ENCODE measurements at regions of chr1 and their contacts with region 1.

Region 1: DNA sequence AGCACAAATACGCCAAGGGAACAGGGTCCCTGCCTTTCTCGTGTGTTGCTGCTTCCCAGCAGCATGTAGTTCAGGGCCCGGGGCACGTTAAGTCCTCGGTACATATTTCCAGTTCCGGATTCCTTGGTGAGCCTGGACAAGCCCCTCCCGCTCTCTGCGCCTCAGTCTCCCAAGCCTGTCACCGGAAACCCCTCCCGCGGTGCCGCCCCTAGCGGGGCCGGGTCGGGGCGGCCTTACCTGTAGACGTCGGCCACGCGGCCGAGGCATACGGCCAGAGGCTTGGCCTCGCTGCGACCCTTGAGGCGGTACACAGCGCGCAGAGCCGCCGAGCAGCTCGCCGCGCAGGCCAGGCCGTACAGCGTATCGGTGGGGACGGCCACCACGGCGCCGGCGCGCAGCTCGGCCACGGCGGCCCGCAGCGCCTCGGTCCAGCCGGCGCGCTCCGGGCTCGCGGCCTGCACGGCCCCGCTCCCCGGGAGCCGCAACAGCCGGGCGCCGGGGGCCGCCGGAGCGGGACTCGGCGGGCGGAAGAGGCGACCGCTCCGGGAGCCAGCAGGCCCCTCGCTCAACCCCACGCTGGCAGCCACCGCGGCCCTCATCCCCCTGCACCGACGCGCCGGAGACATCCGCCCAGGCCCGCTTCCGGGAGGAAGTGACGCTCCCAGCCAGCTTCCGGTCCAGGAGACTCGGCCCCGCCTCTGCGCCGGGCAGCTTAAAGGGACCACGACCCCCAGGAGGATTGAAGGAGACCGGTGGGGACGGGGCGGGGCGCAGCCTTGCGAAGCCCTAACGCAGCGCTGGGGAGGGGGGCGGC is at the starts of genes C1orf122 and YRDC:
- DNase-seq: peak; percentile 92
- ATAC-seq: peak; percentile 84
- H3K4me3 ChIP-seq: peak within 1 kb of the TSS; percentile 90
- H3K27ac ChIP-seq: peak within 1 kb of the TSS; percentile 88
- H3K4me1 ChIP-seq: peaks cover 6% of the 10 kb centered on the region; the same call in 1 of the 2 replicates
- H3K27me3 ChIP-seq: no peaks in the 10 kb centered on the region
- CTCF ChIP-seq: no peak
- POLR2A ChIP-seq: peak; percentile 92
- RAD21 ChIP-seq: no peak
- total RNA-seq, gene C1orf122: 2.0 and 2.2 TPM in 2 replicates
- total RNA-seq, gene YRDC: 19.2 and 21.7 TPM in 2 replicates

Region 2: GRCh38 chr1:37574834-37575480 is 232.8 kb before region 1 on chr1:
- CTCF ChIA-PET with region 1: no interaction called
- POLR2A ChIA-PET with region 1: interaction called, 14 read pairs
- dilution Hi-C with region 1: no loop called
- in situ Hi-C with region 1: no loop called
- intact Hi-C with region 1: no loop called
- DNase-seq: peak; percentile 91
- ATAC-seq: peak; percentile 75
- H3K4me3 ChIP-seq: no peak overlapping the region
- H3K27ac ChIP-seq: peak overlapping the region; percentile 71
- H3K4me1 ChIP-seq: peaks cover 14% of the 10 kb centered on the region
- H3K27me3 ChIP-seq: no peaks in the 10 kb centered on the region
- CTCF ChIP-seq: no peak
- POLR2A ChIP-seq: peak; percentile 69
- RAD21 ChIP-seq: no peak

Region 3: DNA sequence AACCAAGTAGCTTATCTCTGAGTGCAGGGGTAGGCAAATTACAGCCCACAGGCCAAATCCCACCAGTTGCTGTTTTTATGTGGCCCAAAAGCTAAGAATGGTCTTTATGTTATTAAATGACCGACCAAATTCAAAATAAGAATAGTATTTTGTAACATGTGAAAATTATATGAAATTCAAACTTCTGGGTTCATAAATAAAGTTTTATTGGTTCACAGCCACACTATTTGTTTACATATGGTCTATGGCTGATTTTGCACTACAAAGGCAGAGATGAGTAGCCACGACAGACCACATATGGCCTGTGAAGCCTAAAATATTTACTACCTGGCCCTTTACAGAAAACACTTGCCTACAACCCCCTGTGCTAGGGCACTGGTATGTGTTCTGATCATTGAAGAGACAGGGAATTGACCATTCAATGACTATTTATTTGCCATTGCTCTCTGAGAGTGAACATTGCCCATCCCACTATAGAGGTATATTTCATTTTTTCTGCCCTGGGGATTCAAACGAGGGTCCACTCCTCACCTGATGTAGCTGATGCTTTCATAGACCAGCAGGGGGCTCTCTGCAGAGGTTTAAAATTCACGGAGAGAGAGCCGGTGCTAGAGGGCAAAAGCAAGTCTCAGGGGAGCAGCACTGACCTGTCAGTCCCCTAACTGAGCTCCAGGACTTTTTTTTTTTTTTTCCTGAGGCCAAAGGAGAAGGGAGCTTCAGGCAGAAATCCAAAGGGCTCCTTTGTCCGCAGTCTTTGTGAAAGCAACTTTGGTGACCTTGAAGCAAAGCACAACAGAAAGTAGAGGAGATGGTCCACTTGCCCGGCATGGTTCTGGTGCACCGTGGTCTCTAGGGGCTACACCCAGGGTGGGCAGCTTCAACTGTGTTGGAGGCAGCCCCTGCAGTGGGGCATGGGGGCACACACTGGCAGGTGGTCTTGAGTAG is 204.7 kb before region 1 on chr1:
- CTCF ChIA-PET with region 1: interaction called, 4 read pairs
- POLR2A ChIA-PET with region 1: no interaction called
- dilution Hi-C with region 1: no loop called
- in situ Hi-C with region 1: no loop called
- intact Hi-C with region 1: loop called (anchors 10 kb)
- DNase-seq: peak; percentile 16
- ATAC-seq: peak; percentile 70; the same call in 1 of the 2 replicates
- H3K4me3 ChIP-seq: no peak overlapping the region
- H3K27ac ChIP-seq: no peak overlapping the region
- H3K4me1 ChIP-seq: peaks cover 3% of the 10 kb centered on the region; the same call in 1 of the 2 replicates
- H3K27me3 ChIP-seq: peaks cover 26% of the 10 kb centered on the region
- CTCF ChIP-seq: peak; percentile 62
- POLR2A ChIP-seq: no peak
- RAD21 ChIP-seq: peak; percentile 48

Region 4: GRCh38 chr1:37692078-37692833 is 115.5 kb before region 1 on chr1 and contains the start of gene CDCA8:
- CTCF ChIA-PET with region 1: no interaction called
- POLR2A ChIA-PET with region 1: interaction called, 3 read pairs
- dilution Hi-C with region 1: no loop called
- in situ Hi-C with region 1: no loop called
- intact Hi-C with region 1: loop called (anchors 2 kb)
- DNase-seq: peak; percentile 97
- ATAC-seq: peak; percentile 94
- H3K4me3 ChIP-seq: peak within 1 kb of the TSS; percentile 77
- H3K27ac ChIP-seq: peak within 1 kb of the TSS; percentile 83
- H3K4me1 ChIP-seq: peaks cover 5% of the 10 kb centered on the region
- H3K27me3 ChIP-seq: no peaks in the 10 kb centered on the region
- CTCF ChIP-seq: peak; percentile 86
- POLR2A ChIP-seq: peak; percentile 60; the same call in 1 of the 2 replicates
- RAD21 ChIP-seq: no peak
- total RNA-seq, gene CDCA8: 5.9 and 6.1 TPM in 2 replicates

Region 5: DNA sequence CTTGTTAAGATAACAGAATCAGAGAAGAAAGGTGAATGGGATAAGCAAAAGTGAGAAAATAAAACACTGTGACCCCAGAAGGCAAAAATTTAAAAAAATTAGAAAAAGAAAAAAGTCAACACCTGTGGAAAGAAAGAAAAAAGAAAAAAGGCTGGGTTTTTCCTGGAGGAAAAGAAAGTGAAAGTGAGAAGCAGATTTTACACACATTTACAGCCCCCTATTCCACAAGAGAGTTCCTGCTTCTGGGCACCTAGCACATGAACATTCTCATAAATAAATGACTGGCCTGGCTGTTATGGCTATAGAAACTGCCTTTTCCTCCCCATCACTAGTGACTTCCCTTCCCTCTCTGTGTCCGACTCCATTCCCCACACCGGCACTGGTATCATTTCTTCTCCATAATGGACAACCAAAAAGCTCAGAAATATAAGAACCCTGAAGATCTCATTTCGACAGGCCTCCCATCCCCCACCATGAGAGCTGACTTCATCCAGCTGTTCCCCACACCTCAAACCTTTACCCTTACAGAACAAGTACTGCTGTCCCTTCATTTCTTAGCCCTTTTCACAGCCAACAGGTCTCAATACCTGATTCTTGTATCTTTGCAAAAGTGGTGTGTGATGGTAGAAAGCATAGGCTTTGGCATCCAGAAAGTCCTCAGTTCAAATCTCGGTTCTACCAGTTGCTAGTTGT is 39.0 kb after region 1 on chr1:
- CTCF ChIA-PET with region 1: interaction called, 3 read pairs
- POLR2A ChIA-PET with region 1: interaction called, 17 read pairs
- dilution Hi-C with region 1: no loop called
- in situ Hi-C with region 1: no loop called
- intact Hi-C with region 1: no loop called
- DNase-seq: no peak
- ATAC-seq: no peak
- H3K4me3 ChIP-seq: no peak overlapping the region
- H3K27ac ChIP-seq: no peak overlapping the region
- H3K4me1 ChIP-seq: peaks cover 3% of the 10 kb centered on the region
- H3K27me3 ChIP-seq: no peaks in the 10 kb centered on the region
- CTCF ChIP-seq: no peak
- POLR2A ChIP-seq: no peak
- RAD21 ChIP-seq: no peak

Region 6: GRCh38 chr1:37859507-37860345 is 52.0 kb after region 1 on chr1 and contains the start of gene MTF1:
- CTCF ChIA-PET with region 1: interaction called, 3 read pairs
- POLR2A ChIA-PET with region 1: no interaction called
- dilution Hi-C with region 1: no loop called
- in situ Hi-C with region 1: no loop called
- intact Hi-C with region 1: loop called (anchors 1 kb)
- DNase-seq: peak; percentile 95
- ATAC-seq: peak; percentile 99
- H3K4me3 ChIP-seq: peak within 1 kb of the TSS; percentile 94
- H3K27ac ChIP-seq: peak within 1 kb of the TSS; percentile 89
- H3K4me1 ChIP-seq: peaks cover 2% of the 10 kb centered on the region; the same call in 1 of the 2 replicates
- H3K27me3 ChIP-seq: no peaks in the 10 kb centered on the region
- CTCF ChIP-seq: peak; percentile 89
- POLR2A ChIP-seq: peak; percentile 70
- RAD21 ChIP-seq: peak; percentile 61
- total RNA-seq, gene MTF1: 2.2 and 2.3 TPM in 2 replicates

Measured in IMR-90 (cell line).